ENCODE measurements at regions of chr4 and their contacts with region 1.

Region 1: DNA sequence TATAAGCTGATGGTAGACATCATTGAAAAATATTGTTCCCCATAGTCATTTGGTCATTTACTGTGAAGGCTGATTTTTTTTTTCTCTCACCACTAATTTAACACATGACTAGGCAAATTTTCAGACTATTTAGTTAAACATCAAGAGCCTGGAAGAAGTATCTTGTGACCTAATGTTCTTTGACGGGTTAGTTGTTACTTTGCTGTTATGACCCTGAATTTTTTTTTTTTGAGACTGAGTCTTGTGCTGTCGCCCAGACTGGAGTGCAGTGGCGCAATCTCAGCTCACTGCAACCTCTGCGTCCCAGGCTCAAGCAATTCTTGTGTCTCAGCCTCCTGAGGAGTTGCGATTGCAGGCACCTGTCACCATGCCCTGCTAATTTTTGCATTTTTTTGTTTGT is 67.0 kb downstream of the HPF1 start:
- DNase-seq: no peak
- H3K4me3 ChIP-seq: no peak overlapping the region
- H3K4me3 Mint-ChIP-seq: no peak overlapping the region
- H3K27ac Mint-ChIP-seq: no peak overlapping the region
- H3K4me1 ChIP-seq: no peaks in the 10 kb centered on the region
- H3K4me1 Mint-ChIP-seq: no peaks in the 10 kb centered on the region
- H3K27me3 ChIP-seq: no peaks in the 10 kb centered on the region
- H3K27me3 Mint-ChIP-seq: no peaks in the 10 kb centered on the region
- CTCF ChIP-seq: no peak

Region 2: GRCh38 chr4:169791527-169792156 is 100.9 kb after region 1 on chr4:
- CTCF ChIA-PET with region 1: interaction called, 11 read pairs
- POLR2A ChIA-PET with region 1: no interaction called
- intact Hi-C with region 1: no loop called
- DNase-seq: peak; percentile 58 to 60
- H3K4me3 ChIP-seq: no peak overlapping the region
- H3K4me3 Mint-ChIP-seq: peak overlapping the region; percentile 65
- H3K27ac Mint-ChIP-seq: no peak overlapping the region
- H3K4me1 ChIP-seq: no peaks in the 10 kb centered on the region
- H3K4me1 Mint-ChIP-seq: peaks cover 6% of the 10 kb centered on the region
- H3K27me3 ChIP-seq: no peaks in the 10 kb centered on the region
- H3K27me3 Mint-ChIP-seq: peaks cover 30% of the 10 kb centered on the region
- CTCF ChIP-seq: peak; percentile 49 to 55

Measured in Caco-2 (cell line).